ENCODE measurements at regions of chr4 and their contacts with region 1.

Region 1: DNA sequence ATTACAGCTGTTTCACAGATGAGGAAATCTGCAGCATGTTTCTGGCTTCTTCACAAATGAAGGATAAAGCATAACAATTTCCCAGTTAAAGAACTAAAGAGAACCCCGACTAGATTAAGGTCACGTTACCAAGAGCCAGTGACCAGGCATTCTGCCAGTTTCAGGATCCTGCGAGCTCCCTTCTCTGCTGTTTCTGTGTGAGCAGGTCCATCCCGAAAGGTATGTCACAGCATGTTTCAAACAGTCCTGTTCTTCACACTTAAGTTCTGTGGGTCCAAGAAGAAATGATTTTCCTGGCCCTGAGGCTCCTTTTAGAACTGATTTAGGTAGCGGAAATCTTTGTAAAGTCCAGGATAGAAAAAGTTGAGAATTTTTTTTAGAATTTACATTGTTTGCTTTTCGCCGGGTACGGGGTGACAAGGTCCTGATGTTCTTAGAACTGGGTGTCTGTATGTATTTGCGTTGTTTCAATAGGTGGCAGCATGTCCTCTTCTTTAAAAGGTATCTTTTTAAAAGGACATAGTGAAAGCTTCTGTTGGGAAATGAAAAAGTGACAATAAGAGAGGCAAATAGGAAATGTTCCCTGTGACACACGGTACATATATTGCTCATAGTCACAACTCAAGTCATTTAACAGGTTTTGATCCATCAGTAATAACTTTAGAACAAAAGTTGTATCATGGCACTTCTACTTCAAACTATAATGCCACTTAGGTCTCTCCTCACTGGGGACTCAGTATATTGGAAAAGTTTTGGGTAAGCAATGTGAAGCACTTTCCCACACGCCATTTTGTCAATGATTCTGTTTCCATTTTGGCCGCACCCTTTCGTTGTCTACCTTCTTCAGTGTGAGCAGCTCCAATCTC is 18.4 kb downstream of the IL21 start:
- DNase-seq: peak; percentile 59
- H3K4me3 Mint-ChIP-seq: peak overlapping the region; percentile 47
- H3K27ac Mint-ChIP-seq: no peak overlapping the region
- H3K4me1 Mint-ChIP-seq: no peaks in the 10 kb centered on the region
- H3K27me3 Mint-ChIP-seq: peaks cover 18% of the 10 kb centered on the region
- CTCF ChIP-seq: peak; percentile 43

Region 2: GRCh38 chr4:122577808-122578781 is 24.4 kb before region 1 on chr4:
- CTCF ChIA-PET with region 1: interaction called, 11 read pairs
- POLR2A ChIA-PET with region 1: no interaction called
- intact Hi-C with region 1: no loop called
- DNase-seq: peak; percentile 78
- H3K4me3 Mint-ChIP-seq: no peak overlapping the region
- H3K27ac Mint-ChIP-seq: no peak overlapping the region
- H3K4me1 Mint-ChIP-seq: peaks cover 7% of the 10 kb centered on the region
- H3K27me3 Mint-ChIP-seq: peaks cover 10% of the 10 kb centered on the region
- CTCF ChIP-seq: peak; percentile 60

Region 3: DNA sequence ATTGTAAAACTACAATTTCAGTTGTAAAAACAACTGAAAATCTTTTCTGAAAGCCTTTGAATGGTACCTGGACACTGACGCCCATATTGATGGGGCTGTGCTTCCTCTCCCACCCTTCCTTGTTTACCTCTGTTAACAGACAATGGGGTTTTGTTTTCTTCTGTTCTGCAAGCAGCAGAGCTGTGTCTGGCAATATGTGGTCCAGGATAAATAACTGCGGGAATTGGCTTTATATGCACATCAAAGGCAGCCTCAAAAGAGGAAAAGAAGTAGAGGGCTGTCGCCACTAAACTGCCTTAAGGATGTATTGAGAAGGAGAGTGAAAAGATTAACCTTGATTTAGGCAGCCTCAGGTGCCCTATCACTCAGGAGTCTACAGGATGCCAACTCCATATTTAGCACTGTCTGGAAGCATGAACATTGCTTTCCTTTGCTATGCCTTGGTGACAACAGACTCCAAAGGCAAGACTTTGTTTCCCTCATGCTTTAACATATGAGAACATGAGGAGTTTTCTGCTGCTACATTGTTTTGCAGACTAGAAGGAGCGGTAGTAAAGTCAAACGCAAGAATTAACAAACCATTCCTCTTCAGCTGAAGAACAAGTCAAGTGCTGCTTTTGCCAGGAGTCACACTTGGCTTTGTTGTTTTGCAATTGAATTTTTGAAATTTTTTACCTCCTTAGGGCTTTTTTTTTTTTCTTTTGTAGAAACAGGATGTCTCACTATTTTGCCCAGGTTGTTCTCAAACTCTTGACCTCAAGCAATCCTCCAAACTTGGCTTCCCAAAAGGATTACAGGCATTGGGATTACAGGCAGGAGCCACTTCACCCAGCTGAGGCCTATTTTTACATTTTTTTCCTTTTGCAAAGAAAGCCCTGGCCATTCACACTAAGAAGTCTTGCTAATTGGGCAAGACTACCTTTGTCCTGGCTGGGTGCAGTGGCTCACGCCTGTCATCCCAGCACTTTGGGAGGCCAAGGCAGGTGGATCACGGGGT is 15.4 kb after region 1 on chr4:
- CTCF ChIA-PET with region 1: interaction called, 10 read pairs
- POLR2A ChIA-PET with region 1: no interaction called
- intact Hi-C with region 1: no loop called
- DNase-seq: no peak
- H3K4me3 Mint-ChIP-seq: no peak overlapping the region
- H3K27ac Mint-ChIP-seq: no peak overlapping the region
- H3K4me1 Mint-ChIP-seq: no peaks in the 10 kb centered on the region
- H3K27me3 Mint-ChIP-seq: no peaks in the 10 kb centered on the region
- CTCF ChIP-seq: no peak

Region 4: DNA sequence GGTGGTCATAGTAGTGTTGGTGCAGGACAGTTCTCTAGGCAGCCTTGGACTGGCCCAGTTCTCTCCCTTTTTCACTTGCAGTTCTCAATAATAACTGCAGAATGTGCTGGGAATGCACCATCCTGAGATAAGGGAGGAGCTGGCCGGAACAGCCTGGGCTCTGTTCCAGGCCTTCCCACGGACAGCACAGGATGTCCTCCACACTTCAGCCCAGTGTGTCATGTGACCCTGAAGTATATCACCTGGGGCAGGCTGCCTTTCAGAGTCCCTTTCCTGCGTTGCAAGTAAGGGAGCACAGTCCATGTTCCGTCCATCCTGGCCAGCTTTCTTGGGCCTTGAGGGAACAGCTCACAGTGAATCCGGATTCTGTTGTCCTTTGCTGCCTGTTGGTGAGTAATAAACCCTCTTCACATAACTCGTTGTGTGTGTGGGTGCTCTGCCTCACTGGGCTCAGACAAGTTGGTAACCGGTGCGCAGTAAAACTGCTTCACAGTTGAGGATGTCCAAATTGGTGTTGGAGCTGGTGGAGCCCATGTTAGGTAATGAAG is 97.7 kb after region 1 on chr4:
- CTCF ChIA-PET with region 1: interaction called, 18 read pairs
- POLR2A ChIA-PET with region 1: interaction called, 7 read pairs
- intact Hi-C with region 1: no loop called
- DNase-seq: peak; percentile 86
- H3K4me3 Mint-ChIP-seq: peak overlapping the region; percentile 75
- H3K27ac Mint-ChIP-seq: peak overlapping the region; percentile 30
- H3K4me1 Mint-ChIP-seq: peaks cover 25% of the 10 kb centered on the region
- H3K27me3 Mint-ChIP-seq: no peaks in the 10 kb centered on the region
- CTCF ChIP-seq: no peak

Region 5: GRCh38 chr4:122758033-122758432 is 155.5 kb after region 1 on chr4:
- CTCF ChIA-PET with region 1: interaction called, 6 read pairs
- POLR2A ChIA-PET with region 1: no interaction called
- intact Hi-C with region 1: loop called (anchors 1 kb)
- DNase-seq: peak; percentile 51
- H3K4me3 Mint-ChIP-seq: no peak overlapping the region
- H3K27ac Mint-ChIP-seq: peak overlapping the region; percentile 56
- H3K4me1 Mint-ChIP-seq: peaks cover 23% of the 10 kb centered on the region
- H3K27me3 Mint-ChIP-seq: no peaks in the 10 kb centered on the region
- CTCF ChIP-seq: peak; percentile 63

Region 6: GRCh38 chr4:122930862-122931261 is 328.4 kb after region 1 on chr4:
- CTCF ChIA-PET with region 1: interaction called, 46 read pairs
- POLR2A ChIA-PET with region 1: interaction called, 4 read pairs
- intact Hi-C with region 1: loop called (anchors 1 kb)
- DNase-seq: peak; percentile 13
- H3K4me3 Mint-ChIP-seq: no peak overlapping the region
- H3K27ac Mint-ChIP-seq: no peak overlapping the region
- H3K4me1 Mint-ChIP-seq: no peaks in the 10 kb centered on the region
- H3K27me3 Mint-ChIP-seq: no peaks in the 10 kb centered on the region
- CTCF ChIP-seq: peak; percentile 51